Posterior cingulate gyrus (tissue), 11 donors: ENCODE measurements at regions of chr13 and their contacts with region 1.

Region 1: DNA sequence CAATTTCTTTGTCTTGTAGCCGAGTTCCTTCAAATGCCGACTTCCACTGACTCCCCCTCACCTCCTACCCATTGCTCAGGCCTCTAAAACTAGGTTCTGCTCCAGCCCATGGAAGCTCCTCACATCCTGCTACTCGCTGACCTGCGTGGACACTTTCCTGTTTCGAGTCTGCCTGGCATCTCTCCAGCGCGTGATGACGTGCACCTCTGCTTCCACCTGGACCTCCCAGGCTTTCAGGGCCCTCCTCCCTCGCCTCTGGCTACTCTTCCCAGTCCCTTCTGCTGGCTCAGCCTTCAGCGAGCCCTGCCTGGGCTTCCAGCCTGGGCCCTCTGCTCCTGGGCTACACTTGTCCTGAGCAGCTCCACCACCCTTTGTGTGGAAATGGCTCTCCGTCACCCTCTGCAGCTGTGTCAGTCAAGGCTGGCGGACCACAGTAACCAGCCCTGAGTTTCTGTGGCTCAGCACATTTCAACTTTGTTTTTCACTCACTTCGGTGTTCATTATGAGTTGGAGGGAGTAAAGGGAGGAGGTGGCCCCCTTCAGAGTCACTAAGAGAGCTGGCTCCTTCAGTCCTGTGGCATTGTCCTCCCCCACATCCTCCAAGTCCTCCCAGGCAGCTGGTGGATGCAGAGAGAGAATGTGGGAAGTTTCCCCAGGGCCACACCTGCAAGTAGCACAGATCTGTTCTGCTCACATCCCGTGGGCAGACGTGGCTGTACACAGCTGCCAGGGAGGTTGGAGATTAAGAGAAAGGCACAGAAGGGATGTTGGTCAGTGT is 49.3 kb downstream of the SERP2 start:
- DNase-seq: no peak

Region 2: GRCh38 chr13:44312898-44313551 is 109.9 kb before region 1 on chr13:
- intact Hi-C with region 1: loop called (anchors 10 kb)
- DNase-seq: no peak

Region 3: DNA sequence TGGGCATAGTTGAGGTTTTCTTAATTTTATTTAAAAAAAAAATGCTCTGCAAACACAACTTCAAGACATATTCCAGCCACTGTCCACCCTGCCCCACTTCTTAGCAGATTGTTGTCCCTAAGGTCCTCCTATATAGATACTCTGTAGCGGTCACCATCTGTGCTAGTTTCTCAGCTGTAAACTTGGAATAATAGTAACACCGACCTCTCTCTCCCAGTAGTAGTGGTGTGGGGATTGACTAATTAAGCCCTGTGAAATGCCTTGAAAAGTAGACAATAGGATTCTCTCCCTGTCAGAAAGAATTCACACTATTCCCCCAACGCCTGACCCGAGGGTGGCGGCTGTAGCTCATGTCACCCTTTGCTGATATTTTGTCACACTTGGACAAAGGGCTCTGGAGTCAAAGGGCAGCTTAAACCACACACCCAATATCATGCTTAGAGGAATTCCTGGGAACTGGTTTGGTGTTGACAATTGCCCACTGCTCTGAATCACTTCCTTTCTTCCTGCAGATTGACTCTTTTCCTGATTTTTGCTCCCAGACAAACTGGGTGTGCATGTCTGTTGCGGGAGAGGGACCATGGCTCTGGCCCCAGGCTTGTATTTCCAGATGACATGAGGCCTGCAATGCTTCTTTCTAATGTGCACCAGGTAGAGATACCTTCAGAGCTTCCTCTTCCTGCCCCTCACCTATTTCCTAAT is 58.4 kb before region 1 on chr13:
- intact Hi-C with region 1: no loop called
- DNase-seq: no peak

Region 4: GRCh38 chr13:44484562-44485138 is 61.7 kb after region 1 on chr13:
- intact Hi-C with region 1: no loop called
- DNase-seq: no peak